ENCODE measurements at regions of chr5 and their contacts with region 1.

Region 1: GRCh38 chr5:149381987-149382340 is 2.9 kb upstream of the IL17B start:
- H3K4me3 Mint-ChIP-seq: no peak overlapping the region
- H3K27ac Mint-ChIP-seq: no peak overlapping the region
- H3K4me1 Mint-ChIP-seq: no peaks in the 10 kb centered on the region
- H3K27me3 Mint-ChIP-seq: no peaks in the 10 kb centered on the region

Region 2: GRCh38 chr5:149345147-149345875 is 36.7 kb before region 1 on chr5 and contains the start of gene GRPEL2:
- intact Hi-C with region 1: no loop called
- H3K4me3 Mint-ChIP-seq: peak within 1 kb of the TSS; percentile 89
- H3K27ac Mint-ChIP-seq: peak within 1 kb of the TSS; percentile 97
- H3K4me1 Mint-ChIP-seq: peaks cover 37% of the 10 kb centered on the region
- H3K27me3 Mint-ChIP-seq: no peaks in the 10 kb centered on the region

Region 3: GRCh38 chr5:149434162-149435014 is 52.4 kb after region 1 on chr5:
- intact Hi-C with region 1: loop called (anchors 5 kb)
- H3K4me3 Mint-ChIP-seq: no peak overlapping the region
- H3K27ac Mint-ChIP-seq: no peak overlapping the region
- H3K4me1 Mint-ChIP-seq: peaks cover 18% of the 10 kb centered on the region
- H3K27me3 Mint-ChIP-seq: no peaks in the 10 kb centered on the region

Region 4: DNA sequence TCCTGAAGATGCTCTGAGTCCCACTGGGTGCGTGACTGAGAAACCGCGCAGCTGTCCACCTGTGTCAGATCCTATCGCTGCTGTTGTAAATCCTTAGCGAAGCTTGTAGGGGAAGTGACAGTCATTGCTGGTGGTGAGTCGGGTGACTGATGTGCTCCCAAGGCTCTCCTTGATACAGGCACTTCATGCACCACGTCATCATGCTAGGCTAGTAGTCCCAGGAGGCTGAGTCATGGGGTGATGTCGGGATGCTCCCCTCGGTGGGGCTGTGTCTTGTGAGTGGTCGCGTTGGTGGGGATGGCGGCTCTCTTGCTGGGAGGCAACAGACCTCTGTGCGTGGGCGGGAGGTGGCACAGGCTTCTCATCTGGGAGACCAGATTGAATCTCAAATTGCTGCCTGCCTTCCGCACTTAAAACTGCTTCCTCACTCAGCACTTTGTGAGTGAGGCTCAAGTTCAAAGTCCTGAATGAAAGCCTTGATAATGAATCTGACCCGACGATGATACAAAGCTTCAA is 84.6 kb after region 1 on chr5:
- intact Hi-C with region 1: no loop called
- H3K4me3 Mint-ChIP-seq: no peak overlapping the region
- H3K27ac Mint-ChIP-seq: no peak overlapping the region
- H3K4me1 Mint-ChIP-seq: peaks cover 6% of the 10 kb centered on the region
- H3K27me3 Mint-ChIP-seq: peaks cover 1% of the 10 kb centered on the region

Region 5: DNA sequence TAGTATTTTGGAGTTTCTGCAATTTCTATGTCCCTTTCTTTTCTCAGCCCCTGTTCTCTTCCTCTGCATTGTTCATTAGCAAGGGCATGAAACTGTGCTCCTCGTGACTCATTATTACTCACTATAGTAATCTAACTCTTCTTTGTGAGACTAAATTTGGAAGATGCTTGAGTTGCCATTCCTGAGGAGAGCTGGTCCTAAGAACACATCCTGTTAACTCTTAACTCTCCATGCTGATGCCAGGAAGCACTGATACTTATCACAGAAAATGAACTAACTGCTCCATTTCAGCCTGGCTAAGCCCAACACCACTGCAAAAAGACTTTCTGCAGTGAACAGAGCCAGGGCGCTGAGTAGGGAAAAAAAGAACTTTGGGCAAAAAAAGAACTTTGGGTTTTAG is 179.9 kb after region 1 on chr5:
- intact Hi-C with region 1: loop called (anchors 1 kb)
- H3K4me3 Mint-ChIP-seq: no peak overlapping the region
- H3K27ac Mint-ChIP-seq: no peak overlapping the region
- H3K4me1 Mint-ChIP-seq: peaks cover 11% of the 10 kb centered on the region
- H3K27me3 Mint-ChIP-seq: no peaks in the 10 kb centered on the region

Region 6: DNA sequence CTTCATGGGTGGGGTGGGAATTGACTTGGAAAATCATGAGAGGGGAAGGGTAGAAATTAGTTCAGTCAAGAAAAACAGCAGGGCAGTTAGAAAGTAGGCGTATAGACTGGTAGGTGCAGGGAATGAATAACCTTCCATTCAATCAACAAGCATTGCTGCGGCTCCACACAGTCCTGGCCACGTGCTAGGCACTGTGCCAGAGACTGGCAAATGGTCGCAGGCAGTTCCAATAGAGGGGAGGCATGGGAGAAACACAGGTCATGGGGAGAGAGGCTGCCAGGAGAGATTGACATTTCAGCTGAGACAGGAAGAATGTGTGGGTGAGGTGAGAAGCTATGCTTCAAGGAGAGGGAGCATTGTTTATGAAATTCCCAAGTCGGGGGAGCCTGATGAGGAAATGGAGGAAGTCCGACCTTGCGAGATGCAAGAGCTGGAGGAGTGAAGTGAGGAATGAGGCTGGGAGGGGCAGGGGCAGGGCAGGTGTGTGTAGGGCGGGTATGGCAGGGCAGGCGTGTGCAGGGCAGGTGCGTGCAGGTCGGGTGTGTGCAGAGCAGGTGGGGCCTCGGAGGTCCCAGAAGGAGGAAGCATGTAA is 293.7 kb after region 1 on chr5:
- intact Hi-C with region 1: no loop called
- H3K4me3 Mint-ChIP-seq: peak overlapping the region; percentile 22
- H3K27ac Mint-ChIP-seq: peak overlapping the region; percentile 66
- H3K4me1 Mint-ChIP-seq: peaks cover 85% of the 10 kb centered on the region
- H3K27me3 Mint-ChIP-seq: no peaks in the 10 kb centered on the region